Right ventricle myocardium inferior (tissue), 1 donor: ENCODE measurements at regions of chr9 and their contacts with region 1.

Region 1: DNA sequence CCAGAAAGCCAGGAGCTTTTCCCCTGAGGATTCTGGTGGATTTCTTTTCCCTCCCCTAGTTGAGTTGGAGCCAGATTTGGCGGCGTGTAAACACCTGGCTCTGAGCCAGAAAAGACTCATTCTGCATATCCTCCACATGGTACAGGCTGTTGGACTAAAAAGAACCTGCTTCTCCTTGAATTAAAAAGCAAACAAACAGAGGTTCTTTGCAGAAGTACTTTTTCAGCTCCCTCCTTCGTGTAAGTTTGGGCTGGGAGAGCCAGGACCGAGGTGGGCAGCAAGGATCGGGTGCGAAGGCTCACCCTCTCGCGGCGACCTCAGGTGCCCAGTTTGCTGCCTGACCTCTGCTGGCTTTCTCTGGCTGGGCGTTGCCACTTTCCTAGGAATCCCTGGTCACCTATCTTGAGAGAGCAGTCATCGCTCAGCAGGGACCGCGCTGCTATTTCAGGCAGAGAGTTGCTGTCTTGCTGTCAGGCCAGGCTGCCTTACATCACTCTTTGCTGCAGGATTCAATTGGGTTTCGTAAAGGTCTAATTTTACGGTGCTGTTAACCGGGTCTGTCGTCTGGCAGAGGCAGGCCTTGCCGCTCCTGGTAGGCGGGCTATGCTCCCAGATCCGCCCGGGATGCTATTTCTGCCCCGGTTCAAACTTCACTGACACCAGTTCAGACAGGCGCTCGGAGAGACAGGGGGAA is 3.2 kb downstream of the PAPPA start:
- DNase-seq: peak; percentile 83
- ATAC-seq: peak; percentile 92

Region 2: GRCh38 chr9:116646661-116647512 is 490.1 kb after region 1 on chr9:
- intact Hi-C with region 1: loop called (anchors 5 kb)
- DNase-seq: no peak
- ATAC-seq: peak; percentile 79